ENCODE measurements at regions of chr20 and their contacts with region 1.

Region 1: DNA sequence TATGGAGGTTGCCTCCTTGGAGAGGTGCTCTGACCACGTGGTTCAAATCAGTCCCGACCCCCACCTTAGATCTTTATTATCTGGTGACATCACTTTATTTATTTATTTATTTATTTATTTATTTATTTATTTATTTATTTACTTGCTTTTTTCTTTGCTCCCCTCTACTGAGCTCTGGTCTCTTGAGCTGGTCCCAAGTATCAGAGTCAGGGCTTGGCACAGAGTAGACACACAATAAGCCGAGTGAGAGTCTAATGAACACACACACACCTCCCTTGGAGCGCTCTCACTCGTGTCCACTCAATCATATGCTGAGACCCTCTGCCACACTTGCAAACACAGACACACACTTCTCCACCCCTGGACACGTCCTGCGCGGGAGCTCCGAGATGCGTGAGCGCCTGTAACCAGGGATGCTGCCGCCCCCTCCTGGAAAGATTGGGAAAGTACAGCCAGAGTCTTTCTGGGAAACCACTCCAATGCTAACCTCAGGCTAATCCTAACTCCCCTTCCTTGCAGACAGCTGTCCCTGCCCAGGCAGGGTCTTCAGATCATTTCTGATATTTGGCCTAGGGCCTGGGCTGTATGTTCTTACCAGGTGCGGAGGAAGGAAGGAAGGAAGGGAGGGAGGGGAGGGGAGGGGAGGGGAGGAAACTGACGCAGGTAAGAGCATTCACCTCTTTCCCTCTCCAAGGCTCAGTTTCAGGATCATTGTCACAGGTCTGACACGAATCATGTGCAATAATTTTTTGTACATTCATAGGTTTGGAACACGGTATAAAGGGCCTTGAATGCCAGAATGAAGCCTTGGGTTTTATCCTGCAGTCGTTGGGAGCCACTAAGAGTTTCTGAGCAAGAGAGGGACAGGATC is 70.9 kb downstream of the STK35 start:
- DNase-seq: peak; percentile 76
- ATAC-seq: peak; percentile 69
- H3K4me3 ChIP-seq: no peak overlapping the region
- H3K4me3 Mint-ChIP-seq: peak overlapping the region; percentile 18
- H3K27ac ChIP-seq: no peak overlapping the region
- H3K27ac Mint-ChIP-seq: no peak overlapping the region
- H3K4me1 ChIP-seq: peaks cover 0 to 3% of the 10 kb centered on the region in 2 donors
- H3K4me1 Mint-ChIP-seq: peaks cover 3% of the 10 kb centered on the region
- H3K27me3 ChIP-seq: peaks cover 0 to 6% (median 1%) of the 10 kb centered on the region in 4 experiments
- H3K27me3 Mint-ChIP-seq: peaks cover 32% of the 10 kb centered on the region
- CTCF ChIP-seq: peak; percentile 88

Region 2: DNA sequence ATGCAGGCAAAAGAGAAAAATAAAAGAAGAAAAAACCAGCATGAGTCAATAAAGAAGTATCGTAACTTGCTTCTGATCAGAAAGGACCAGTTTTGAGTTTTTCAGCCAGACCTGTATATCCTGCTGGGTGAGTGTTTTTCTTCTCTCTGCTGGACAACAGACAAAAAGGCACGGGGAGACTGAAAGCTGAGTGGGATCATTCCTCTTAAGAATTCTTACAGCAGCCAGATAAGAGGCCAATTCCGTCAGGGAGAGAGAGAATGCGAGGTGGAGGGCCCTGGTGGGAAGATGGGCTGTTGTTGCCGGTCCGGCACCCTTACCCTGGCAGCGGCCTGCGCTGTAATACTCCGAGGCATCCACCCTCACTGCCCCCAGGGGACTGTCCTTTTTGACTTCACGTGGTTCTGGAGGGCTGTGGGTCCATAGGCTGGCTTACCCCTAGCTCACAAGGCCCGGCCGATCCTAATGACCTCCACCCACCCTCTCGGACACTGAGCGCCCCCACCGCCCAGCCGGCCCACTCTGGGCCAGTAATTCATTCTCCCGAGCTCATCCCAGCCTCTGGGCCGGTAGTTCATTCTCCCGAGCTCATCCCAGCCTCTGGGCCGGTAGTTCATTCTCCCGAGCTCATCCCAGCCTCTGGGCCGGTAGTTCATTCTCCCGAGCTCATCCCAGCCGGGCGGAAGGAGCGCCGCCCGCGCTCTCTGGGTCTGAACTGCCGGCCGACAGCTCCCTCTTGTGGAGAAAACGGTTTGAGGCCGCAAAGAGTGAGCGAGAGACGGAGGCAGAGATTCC is 395.7 kb before region 1 on chr20:
- CTCF ChIA-PET with region 1: interaction called, 34 read pairs
- POLR2A ChIA-PET with region 1: no interaction called
- intact Hi-C with region 1: loop called (anchors 5 kb)
- DNase-seq: peak; percentile 87
- ATAC-seq: peak; percentile 92
- H3K4me3 ChIP-seq: peak overlapping the region in 4 of 5 experiments; percentile 64 to 95 (median 74)
- H3K4me3 Mint-ChIP-seq: peak overlapping the region; percentile 93
- H3K27ac ChIP-seq: peak overlapping the region; percentile 32 to 66
- H3K27ac Mint-ChIP-seq: peak overlapping the region; percentile 65
- H3K4me1 ChIP-seq: peaks cover 11 to 13% of the 10 kb centered on the region in 2 donors
- H3K4me1 Mint-ChIP-seq: peaks cover 16% of the 10 kb centered on the region
- H3K27me3 ChIP-seq: peaks cover 0 to 10% (median 2%) of the 10 kb centered on the region in 4 experiments
- H3K27me3 Mint-ChIP-seq: peaks cover 16% of the 10 kb centered on the region
- CTCF ChIP-seq: peak; percentile 78

Region 3: DNA sequence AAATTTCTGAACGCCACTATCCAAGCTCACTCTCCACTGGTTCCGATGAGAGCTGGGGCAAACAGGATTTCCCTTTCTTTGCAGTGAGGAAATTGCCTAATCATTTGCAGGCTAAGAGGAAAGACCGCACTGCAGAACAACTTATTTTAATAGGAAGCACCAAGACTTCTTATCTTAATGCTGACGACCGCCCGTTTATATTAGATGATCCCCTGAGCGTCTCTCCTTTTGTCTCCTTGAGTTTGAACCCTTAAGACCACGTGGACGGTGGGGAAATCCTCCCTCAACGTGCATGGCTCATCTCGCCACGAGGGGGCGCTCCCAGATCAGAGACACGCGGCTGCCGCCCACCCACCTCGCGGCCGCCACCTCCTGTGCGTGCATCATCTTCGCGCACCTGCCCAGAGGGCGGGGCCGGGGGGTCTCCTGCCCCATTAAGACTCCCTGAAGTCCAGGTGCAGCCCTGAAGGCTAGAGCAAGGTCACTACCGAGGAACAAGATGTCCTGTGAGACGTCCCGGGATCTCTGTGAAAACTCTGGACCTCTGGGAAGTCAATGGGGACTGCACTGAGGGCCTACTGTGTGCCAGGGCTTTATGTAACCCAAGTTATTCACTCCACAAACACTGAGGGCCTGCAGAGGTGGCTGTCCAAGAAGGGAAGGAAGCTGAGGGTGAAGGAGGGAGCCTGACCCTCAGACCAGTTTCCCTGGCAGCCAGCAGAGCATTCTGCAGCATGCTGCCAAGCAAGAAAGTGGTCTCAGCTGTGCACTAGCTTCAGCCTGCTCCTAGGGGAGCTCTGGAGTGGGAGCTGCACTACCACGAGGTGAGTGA is 206.8 kb before region 1 on chr20:
- CTCF ChIA-PET with region 1: interaction called, 95 read pairs
- POLR2A ChIA-PET with region 1: no interaction called
- intact Hi-C with region 1: loop called (anchors 1 kb)
- DNase-seq: peak; percentile 87
- ATAC-seq: peak; percentile 88
- H3K4me3 ChIP-seq: peak overlapping the region; percentile 9 to 57 (median 42)
- H3K4me3 Mint-ChIP-seq: peak overlapping the region; percentile 50
- H3K27ac ChIP-seq: no peak overlapping the region
- H3K27ac Mint-ChIP-seq: no peak overlapping the region
- H3K4me1 ChIP-seq: peaks cover 16 to 18% of the 10 kb centered on the region in 2 donors
- H3K4me1 Mint-ChIP-seq: peaks cover 18% of the 10 kb centered on the region
- H3K27me3 ChIP-seq: no peaks in the 10 kb centered on the region
- H3K27me3 Mint-ChIP-seq: peaks cover 2% of the 10 kb centered on the region
- CTCF ChIP-seq: peak; percentile 93

Region 4: DNA sequence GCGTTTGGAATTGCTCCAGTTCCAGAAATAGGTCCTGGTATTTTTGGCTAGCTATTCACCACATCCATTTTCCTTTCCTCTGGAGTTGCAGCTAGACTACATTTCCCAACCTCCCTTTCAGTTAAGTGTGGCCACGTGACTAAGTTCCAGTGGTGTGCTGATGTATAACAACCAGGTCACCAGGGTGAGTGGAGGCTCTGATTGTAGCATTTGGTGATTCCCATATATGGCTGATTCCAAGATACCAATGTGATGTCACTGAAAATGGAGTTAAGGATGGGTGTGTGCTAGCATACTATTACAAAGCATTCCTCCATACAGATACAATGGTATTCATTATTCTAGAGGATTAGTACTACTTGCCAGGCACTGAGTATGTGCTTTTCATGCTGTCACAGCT is 120.6 kb before region 1 on chr20:
- CTCF ChIA-PET with region 1: no interaction called
- POLR2A ChIA-PET with region 1: no interaction called
- intact Hi-C with region 1: no loop called
- DNase-seq: no peak
- ATAC-seq: no peak
- H3K4me3 ChIP-seq: no peak overlapping the region
- H3K4me3 Mint-ChIP-seq: no peak overlapping the region
- H3K27ac ChIP-seq: no peak overlapping the region
- H3K27ac Mint-ChIP-seq: no peak overlapping the region
- H3K4me1 ChIP-seq: no peaks in the 10 kb centered on the region
- H3K4me1 Mint-ChIP-seq: no peaks in the 10 kb centered on the region
- H3K27me3 ChIP-seq: peaks cover 0 to 12% (median 2%) of the 10 kb centered on the region in 4 experiments
- H3K27me3 Mint-ChIP-seq: peaks cover 67% of the 10 kb centered on the region
- CTCF ChIP-seq: no peak

Region 5: GRCh38 chr20:2093159-2093781 is 79.3 kb before region 1 on chr20:
- CTCF ChIA-PET with region 1: interaction called, 12 read pairs
- POLR2A ChIA-PET with region 1: no interaction called
- intact Hi-C with region 1: no loop called
- DNase-seq: peak; percentile 51
- ATAC-seq: no peak
- H3K4me3 ChIP-seq: no peak overlapping the region
- H3K4me3 Mint-ChIP-seq: no peak overlapping the region
- H3K27ac ChIP-seq: no peak overlapping the region
- H3K27ac Mint-ChIP-seq: no peak overlapping the region
- H3K4me1 ChIP-seq: no peaks in the 10 kb centered on the region
- H3K4me1 Mint-ChIP-seq: peaks cover 2% of the 10 kb centered on the region
- H3K27me3 ChIP-seq: peaks cover 0 to 23% (median 7%) of the 10 kb centered on the region in 4 experiments
- H3K27me3 Mint-ChIP-seq: peaks cover 46% of the 10 kb centered on the region
- CTCF ChIP-seq: peak; percentile 77

Region 6: GRCh38 chr20:2122936-2123335 is 49.6 kb before region 1 on chr20:
- CTCF ChIA-PET with region 1: interaction called, 28 read pairs
- POLR2A ChIA-PET with region 1: no interaction called
- intact Hi-C with region 1: loop called (anchors 2 kb)
- DNase-seq: no peak
- ATAC-seq: no peak
- H3K4me3 ChIP-seq: no peak overlapping the region
- H3K4me3 Mint-ChIP-seq: no peak overlapping the region
- H3K27ac ChIP-seq: no peak overlapping the region
- H3K27ac Mint-ChIP-seq: peak overlapping the region; percentile 12
- H3K4me1 ChIP-seq: peaks cover 22% of the 10 kb centered on the region in 2 donors
- H3K4me1 Mint-ChIP-seq: peaks cover 72% of the 10 kb centered on the region
- H3K27me3 ChIP-seq: no peaks in the 10 kb centered on the region
- H3K27me3 Mint-ChIP-seq: no peaks in the 10 kb centered on the region
- CTCF ChIP-seq: no peak

Measured in B cell (primary cell).